Cardiac septum (tissue), 1 donor: ENCODE measurements at regions of chr6 and their contacts with region 1.

Region 1: DNA sequence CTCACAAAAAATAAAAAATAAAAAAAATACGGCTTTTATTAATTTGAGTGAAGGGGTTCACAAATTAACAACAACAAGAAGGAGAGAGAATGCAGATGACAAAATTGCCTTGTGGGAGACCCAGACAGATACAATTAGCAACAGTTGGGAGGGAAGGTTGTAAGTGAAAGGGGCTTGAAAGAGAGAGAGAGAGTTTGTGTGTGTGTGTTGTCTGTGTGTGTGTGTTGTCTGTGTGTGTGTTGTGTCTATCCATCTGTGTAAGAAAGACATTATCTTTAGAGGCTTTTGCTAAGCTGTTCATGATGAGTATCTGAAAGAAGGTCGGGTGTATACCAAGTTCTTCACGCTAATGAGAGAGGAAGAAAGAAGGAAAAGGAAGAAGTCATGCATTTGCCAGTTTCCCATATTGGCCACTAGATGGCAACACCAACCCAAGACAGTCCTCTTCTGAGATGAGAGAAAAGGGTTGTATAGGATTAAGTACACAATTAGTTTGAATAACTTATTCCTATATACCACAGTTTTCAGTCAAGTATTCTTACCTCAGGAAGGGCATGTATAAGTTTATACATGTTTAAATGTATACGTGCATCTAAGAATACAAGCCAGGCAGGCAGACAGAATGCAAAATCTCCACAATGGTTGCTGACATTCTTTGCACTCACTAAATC is 63.7 kb upstream of the CD2AP start:
- DNase-seq: no peak

Region 2: GRCh38 chr6:47733879-47734558 is 320.1 kb after region 1 on chr6:
- intact Hi-C with region 1: loop called (anchors 5 kb)
- DNase-seq: no peak

Region 3: GRCh38 chr6:47780510-47781356 is 366.8 kb after region 1 on chr6:
- intact Hi-C with region 1: loop called (anchors 5 kb)
- DNase-seq: no peak